Left cardiac atrium (tissue), 4 donors: ENCODE measurements at regions of chr3 and their contacts with region 1.

Region 1: GRCh38 chr3:119034256-119035013 is at the start of gene IGSF11:
- DNase-seq: peak; percentile 73
- ATAC-seq: peak; percentile 95 to 97
- total RNA-seq, gene IGSF11: 2.2 to 2.7 TPM

Region 2: GRCh38 chr3:118618247-118619040 is 416.0 kb before region 1 on chr3:
- intact Hi-C with region 1: no loop called
- DNase-seq: no peak
- ATAC-seq: no peak

Region 3: DNA sequence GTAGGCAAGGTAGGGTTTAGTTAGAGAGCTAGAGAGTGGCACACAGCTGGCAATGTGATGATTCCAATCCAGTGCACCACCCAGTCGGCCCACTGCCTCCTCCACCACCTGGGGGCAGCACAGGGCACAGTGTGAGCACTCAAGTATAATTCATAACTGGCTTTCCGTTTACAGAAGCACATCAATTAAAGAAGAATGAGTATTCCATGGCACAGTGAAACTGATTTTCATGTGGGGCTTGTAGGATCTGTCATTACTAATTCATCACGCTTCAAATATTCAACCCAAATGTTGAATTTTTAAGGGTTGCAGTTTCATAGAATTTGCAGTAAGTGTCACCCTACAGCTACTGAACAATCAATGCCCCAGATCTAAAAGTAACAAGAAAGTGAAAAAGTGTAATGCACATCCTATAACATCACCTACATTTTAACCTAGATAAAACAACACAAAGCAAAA is 149.7 kb before region 1 on chr3:
- intact Hi-C with region 1: loop called (anchors 1 to 2 kb)
- DNase-seq: peak; percentile 76
- ATAC-seq: peak; percentile 87 to 89

Region 4: DNA sequence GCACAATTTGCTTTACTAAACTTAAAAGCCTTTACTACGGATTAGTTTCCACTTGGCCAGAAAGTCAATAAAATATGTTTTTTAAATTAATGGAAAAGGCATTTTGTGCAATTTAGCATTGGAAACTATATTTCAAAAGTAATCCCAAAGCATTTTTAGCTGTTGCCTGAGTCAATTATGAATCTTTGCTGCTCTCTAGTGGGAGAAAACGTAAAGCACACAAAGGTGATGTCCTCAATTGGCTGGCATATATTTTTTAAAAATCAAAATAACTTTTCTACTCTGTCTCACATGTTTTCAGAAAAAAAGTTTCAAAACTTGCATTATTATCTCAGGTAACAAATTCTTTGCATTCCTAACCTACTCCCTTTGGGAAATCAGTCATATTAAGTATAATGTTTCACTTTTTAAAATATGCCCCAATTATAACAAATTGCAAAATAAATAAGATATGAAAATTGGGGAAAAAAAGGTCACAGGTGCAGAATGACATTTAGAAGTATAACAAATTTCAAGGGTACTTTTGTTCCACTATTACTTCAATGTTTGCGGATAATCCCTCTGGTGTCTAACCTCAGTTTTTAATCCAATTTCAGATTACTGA is 64.3 kb after region 1 on chr3:
- intact Hi-C with region 1: loop called (anchors 5 to 10 kb)
- DNase-seq: no peak
- ATAC-seq: no peak